ENCODE measurements at regions of chr2 and their contacts with region 1.

Region 1: DNA sequence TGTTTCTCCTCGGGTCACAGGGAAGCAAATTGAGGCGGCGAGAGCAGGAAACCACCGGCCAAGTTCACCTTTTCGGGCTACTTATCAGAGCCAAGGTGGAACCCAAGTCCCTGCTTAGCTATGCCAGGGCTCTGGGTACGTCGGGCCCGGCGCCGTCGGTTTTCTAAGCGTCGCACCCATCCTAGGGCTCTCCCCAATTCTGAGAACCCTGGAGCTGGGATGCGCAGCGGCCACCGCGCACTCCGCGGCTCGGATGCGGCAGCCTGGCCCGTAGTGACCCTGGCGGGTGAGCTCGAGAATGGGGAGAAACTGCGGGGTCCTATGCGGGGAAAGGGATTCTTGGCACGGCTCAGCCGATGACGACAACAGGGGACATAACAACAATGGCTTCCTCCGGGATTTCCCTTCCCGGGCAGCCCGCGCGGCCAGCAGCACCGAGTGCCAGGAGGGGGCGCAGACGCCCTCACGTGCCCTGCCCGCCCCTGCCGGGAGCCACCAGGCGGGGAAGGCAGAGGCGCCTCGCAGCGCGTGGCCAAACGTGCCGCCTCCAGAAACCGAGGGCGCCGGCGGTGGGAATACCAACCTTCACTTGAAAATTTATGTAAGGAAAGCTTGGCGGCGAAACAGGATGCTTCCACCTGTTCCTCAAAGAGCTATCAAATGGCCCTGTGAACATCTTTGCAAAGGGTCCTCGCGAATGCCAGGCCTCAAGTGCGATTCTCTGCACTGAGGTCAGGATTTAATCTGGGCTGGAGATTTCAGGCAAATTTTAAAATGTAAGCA is 2.1 kb upstream of the SLC30A3 start:
- DNase-seq: peak; percentile 80 to 92
- H3K4me3 ChIP-seq: peak overlapping the region; percentile 50
- H3K4me3 Mint-ChIP-seq: peak overlapping the region; percentile 74
- H3K27ac Mint-ChIP-seq: no peak overlapping the region
- H3K4me1 ChIP-seq: peaks cover 18% of the 10 kb centered on the region
- H3K4me1 Mint-ChIP-seq: peaks cover 13% of the 10 kb centered on the region
- H3K27me3 ChIP-seq: peaks cover 6% of the 10 kb centered on the region; the same call in 1 of the 2 replicates
- H3K27me3 Mint-ChIP-seq: peaks cover 27% of the 10 kb centered on the region
- CTCF ChIP-seq: peak; percentile 78 to 88

Region 2: DNA sequence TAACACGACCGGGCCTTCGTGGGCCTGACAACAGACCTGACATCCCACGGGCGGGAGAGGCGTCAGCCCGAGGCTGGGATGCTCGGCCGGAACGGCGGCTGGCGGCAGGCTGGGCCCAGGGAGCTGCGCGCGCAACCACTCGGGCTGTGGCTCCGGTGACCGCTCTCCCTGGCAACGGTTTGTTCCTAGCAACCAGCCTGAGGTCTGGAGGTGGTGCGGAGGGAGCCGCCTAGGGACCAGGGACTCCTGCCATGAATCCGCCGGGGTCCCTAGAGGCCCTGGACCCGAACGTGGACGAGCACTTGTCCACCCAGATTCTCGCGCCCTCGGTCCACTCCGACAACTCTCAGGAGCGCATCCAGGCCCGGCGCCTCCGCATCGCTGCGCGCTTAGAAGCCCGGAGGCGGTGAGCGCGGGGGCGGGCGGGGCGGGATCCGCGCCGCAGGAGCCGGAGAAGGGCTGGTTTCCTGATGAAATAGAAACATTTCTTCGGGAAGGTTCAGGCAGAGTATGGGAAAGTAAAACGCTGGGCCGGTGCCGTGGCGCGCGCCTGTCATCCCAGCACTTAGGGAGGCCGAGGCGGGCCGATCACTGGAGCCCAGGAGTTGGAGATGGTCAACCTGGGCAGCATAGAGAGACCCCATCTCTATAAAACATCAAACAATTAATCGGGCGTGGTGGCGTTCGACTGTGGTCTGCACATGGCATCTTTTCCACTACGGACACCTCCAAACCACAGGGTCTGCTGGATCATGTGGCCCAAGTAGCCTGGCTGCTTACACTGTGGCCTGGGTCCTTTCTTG is 863.0 kb before region 1 on chr2 and contains the start of gene DRC1:
- CTCF ChIA-PET with region 1: no interaction called
- POLR2A ChIA-PET with region 1: no interaction called
- intact Hi-C with region 1: no loop called
- DNase-seq: peak; percentile 62 to 66
- H3K4me3 ChIP-seq: peak within 1 kb of the TSS; percentile 20; the same call in 1 of the 2 replicates
- H3K4me3 Mint-ChIP-seq: no peak within 1 kb of the TSS
- H3K27ac Mint-ChIP-seq: no peak within 1 kb of the TSS
- H3K4me1 ChIP-seq: no peaks in the 10 kb centered on the region
- H3K4me1 Mint-ChIP-seq: no peaks in the 10 kb centered on the region
- H3K27me3 ChIP-seq: no peaks in the 10 kb centered on the region
- H3K27me3 Mint-ChIP-seq: no peaks in the 10 kb centered on the region
- CTCF ChIP-seq: no peak
- total RNA-seq, gene DRC1: 0.49 and 1.1 TPM in 2 replicates

Region 3: GRCh38 chr2:27024188-27024587 is 240.8 kb before region 1 on chr2:
- CTCF ChIA-PET with region 1: no interaction called
- POLR2A ChIA-PET with region 1: no interaction called
- intact Hi-C with region 1: no loop called
- DNase-seq: no peak
- H3K4me3 ChIP-seq: no peak overlapping the region
- H3K4me3 Mint-ChIP-seq: no peak overlapping the region
- H3K27ac Mint-ChIP-seq: no peak overlapping the region
- H3K4me1 ChIP-seq: peaks cover 29% of the 10 kb centered on the region
- H3K4me1 Mint-ChIP-seq: peaks cover 26% of the 10 kb centered on the region
- H3K27me3 ChIP-seq: no peaks in the 10 kb centered on the region
- H3K27me3 Mint-ChIP-seq: no peaks in the 10 kb centered on the region
- CTCF ChIP-seq: no peak

Region 4: DNA sequence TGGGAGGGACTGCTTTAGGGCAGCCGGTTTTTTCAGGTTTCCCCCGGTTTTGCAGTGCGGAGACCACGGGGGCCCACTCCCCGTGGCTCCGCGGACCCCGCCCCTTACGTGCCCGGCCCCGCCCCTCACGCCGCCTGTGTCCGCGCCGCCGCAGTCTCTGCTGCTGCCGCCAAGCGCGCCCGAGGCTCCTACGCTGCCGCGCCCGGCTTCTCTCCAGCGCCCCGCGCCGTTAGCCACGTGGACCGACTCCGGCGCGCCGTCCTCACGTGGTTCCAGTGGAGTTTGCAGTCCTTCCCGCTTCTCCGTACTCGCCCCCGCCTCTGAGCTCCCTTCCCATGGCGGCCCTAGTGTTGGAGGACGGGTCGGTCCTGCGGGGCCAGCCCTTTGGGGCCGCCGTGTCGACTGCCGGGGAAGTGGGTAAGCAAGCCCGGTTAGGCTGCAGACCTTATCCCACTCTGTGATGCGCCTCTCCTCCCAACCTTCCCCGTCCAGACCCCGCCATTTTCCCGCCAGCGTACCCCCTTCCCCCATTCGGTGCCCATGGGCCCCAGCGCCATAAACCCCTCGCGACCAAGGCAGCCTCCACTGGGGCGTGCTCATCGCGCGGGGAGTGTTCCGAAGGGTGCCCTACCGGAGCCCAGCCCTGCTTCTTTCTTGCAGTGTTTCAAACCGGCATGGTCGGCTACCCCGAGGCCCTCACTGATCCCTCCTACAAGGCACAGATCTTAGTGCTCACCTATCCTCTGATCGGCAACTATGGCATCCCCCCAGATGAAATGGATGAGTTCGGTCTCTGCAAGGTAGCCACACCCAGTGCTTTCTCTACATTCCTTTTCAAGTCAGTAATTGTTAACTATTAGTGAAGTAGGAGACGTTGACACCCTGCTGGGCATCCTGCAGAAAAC is 47.5 kb before region 1 on chr2 and contains the start of gene CAD:
- CTCF ChIA-PET with region 1: no interaction called
- POLR2A ChIA-PET with region 1: no interaction called
- intact Hi-C with region 1: loop called (anchors 5 kb)
- DNase-seq: peak; percentile 87 to 93
- H3K4me3 ChIP-seq: peak within 1 kb of the TSS; percentile 88
- H3K4me3 Mint-ChIP-seq: peak within 1 kb of the TSS; percentile 98
- H3K27ac Mint-ChIP-seq: peak within 1 kb of the TSS; percentile 98
- H3K4me1 ChIP-seq: peaks cover 23% of the 10 kb centered on the region
- H3K4me1 Mint-ChIP-seq: peaks cover 23% of the 10 kb centered on the region
- H3K27me3 ChIP-seq: no peaks in the 10 kb centered on the region
- H3K27me3 Mint-ChIP-seq: no peaks in the 10 kb centered on the region
- CTCF ChIP-seq: peak; percentile 18 to 21
- total RNA-seq, gene CAD: 86.4 and 103 TPM in 2 replicates

Region 5: DNA sequence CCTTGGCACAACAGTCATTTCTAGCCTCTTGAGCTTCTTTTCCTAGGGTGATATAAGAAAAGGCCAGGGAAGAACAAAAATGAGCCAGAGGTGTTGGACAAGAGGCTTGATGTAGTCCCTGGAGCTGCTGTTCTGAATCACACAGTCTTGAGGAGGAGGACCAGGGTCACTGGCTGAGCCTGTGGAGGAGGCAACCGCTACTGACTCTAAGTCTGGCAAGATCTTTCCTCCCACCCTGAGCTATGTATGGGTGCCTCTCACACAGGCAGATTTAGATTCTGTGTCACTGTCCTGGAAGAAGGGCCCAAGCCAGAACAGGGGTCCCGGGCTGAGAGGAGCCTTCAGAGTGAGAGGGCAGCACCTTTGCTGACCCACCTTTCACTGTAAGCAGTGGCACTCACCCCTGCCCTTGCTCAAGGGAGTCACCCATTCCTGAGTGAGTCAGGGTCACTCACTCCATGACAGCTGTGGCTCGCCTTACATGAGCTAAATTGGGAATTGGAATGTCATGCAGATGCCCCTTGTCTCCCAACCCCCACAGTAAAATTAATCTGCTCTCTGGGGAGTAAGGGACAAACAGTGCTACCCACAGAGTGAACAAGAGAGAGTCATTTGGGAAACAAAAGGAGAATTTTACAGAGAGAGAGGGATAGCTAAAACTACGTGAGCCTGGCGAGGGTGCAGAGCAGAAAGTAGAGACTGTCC is 17.1 kb after region 1 on chr2 and contains the start of gene TRIM54:
- CTCF ChIA-PET with region 1: interaction called, 20 read pairs
- POLR2A ChIA-PET with region 1: no interaction called
- intact Hi-C with region 1: loop called (anchors 1 kb)
- DNase-seq: no peak
- H3K4me3 ChIP-seq: no peak within 1 kb of the TSS
- H3K4me3 Mint-ChIP-seq: no peak within 1 kb of the TSS
- H3K27ac Mint-ChIP-seq: peak within 1 kb of the TSS; percentile 68
- H3K4me1 ChIP-seq: peaks cover 7% of the 10 kb centered on the region
- H3K4me1 Mint-ChIP-seq: peaks cover 16% of the 10 kb centered on the region
- H3K27me3 ChIP-seq: no peaks in the 10 kb centered on the region
- H3K27me3 Mint-ChIP-seq: no peaks in the 10 kb centered on the region
- CTCF ChIP-seq: no peak
- total RNA-seq, gene TRIM54: 0.25 TPM in 1 of 2 replicates, not detected in the other

Region 6: DNA sequence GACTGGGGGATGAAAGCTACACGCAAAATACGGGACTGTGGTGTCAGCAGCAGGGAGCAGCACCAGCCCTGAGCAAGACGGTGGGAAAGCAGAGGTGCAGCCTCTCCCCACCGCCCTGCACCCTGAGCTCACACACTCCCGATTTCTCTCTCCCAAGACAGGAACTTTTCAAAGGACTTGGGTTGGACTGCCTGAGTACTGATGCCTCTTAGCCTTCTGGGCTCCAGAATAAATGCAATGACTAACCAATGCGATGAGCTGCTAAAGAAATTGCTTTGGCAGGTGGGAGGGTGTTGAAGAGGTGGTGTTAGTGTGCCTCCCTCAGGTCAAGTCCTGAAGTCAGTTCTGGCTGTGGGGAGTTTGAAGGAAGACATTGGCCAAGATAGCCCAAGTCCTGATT is 26.9 kb after region 1 on chr2:
- CTCF ChIA-PET with region 1: interaction called, 13 read pairs
- POLR2A ChIA-PET with region 1: interaction called, 3 read pairs
- intact Hi-C with region 1: loop called (anchors 1 kb)
- DNase-seq: peak in 1 of 2 experiments; percentile 42
- H3K4me3 ChIP-seq: no peak overlapping the region
- H3K4me3 Mint-ChIP-seq: peak overlapping the region; percentile 17
- H3K27ac Mint-ChIP-seq: peak overlapping the region; percentile 47
- H3K4me1 ChIP-seq: peaks cover 61% of the 10 kb centered on the region
- H3K4me1 Mint-ChIP-seq: peaks cover 42% of the 10 kb centered on the region
- H3K27me3 ChIP-seq: no peaks in the 10 kb centered on the region
- H3K27me3 Mint-ChIP-seq: no peaks in the 10 kb centered on the region
- CTCF ChIP-seq: peak in 1 of 2 experiments; percentile 19

Region 7: GRCh38 chr2:27335311-27335710 is 70.4 kb after region 1 on chr2:
- CTCF ChIA-PET with region 1: no interaction called
- POLR2A ChIA-PET with region 1: no interaction called
- intact Hi-C with region 1: no loop called
- DNase-seq: no peak
- H3K4me3 ChIP-seq: no peak overlapping the region
- H3K4me3 Mint-ChIP-seq: no peak overlapping the region
- H3K27ac Mint-ChIP-seq: no peak overlapping the region
- H3K4me1 ChIP-seq: no peaks in the 10 kb centered on the region
- H3K4me1 Mint-ChIP-seq: no peaks in the 10 kb centered on the region
- H3K27me3 ChIP-seq: no peaks in the 10 kb centered on the region
- H3K27me3 Mint-ChIP-seq: no peaks in the 10 kb centered on the region
- CTCF ChIP-seq: no peak